Aorta (tissue), 5 donors: ENCODE measurements at regions of chr11 and their contacts with region 1.

Region 1: GRCh38 chr11:61792310-61793085 is at the starts of genes FEN1 and TMEM258:
- DNase-seq: peak; percentile 94 to 96
- ATAC-seq: peak; percentile 96
- H3K4me3 ChIP-seq: peak within 1 kb of the TSS; percentile 65 to 82
- H3K27ac ChIP-seq: peak within 1 kb of the TSS in 1 of 2 donors; percentile 98
- H3K4me1 ChIP-seq: no peaks in the 10 kb centered on the region
- H3K27me3 ChIP-seq: no peaks in the 10 kb centered on the region
- total RNA-seq, gene FEN1: 5.5 to 6.9 TPM
- total RNA-seq, gene TMEM258: 73.2 to 84.1 TPM

Region 2: GRCh38 chr11:61477727-61478148 is 314.8 kb before region 1 on chr11:
- intact Hi-C with region 1: no loop called
- DNase-seq: peak; percentile 59 to 89
- ATAC-seq: peak; percentile 55
- H3K4me3 ChIP-seq: no peak overlapping the region
- H3K27ac ChIP-seq: no peak overlapping the region
- H3K4me1 ChIP-seq: no peaks in the 10 kb centered on the region
- H3K27me3 ChIP-seq: no peaks in the 10 kb centered on the region

Region 3: DNA sequence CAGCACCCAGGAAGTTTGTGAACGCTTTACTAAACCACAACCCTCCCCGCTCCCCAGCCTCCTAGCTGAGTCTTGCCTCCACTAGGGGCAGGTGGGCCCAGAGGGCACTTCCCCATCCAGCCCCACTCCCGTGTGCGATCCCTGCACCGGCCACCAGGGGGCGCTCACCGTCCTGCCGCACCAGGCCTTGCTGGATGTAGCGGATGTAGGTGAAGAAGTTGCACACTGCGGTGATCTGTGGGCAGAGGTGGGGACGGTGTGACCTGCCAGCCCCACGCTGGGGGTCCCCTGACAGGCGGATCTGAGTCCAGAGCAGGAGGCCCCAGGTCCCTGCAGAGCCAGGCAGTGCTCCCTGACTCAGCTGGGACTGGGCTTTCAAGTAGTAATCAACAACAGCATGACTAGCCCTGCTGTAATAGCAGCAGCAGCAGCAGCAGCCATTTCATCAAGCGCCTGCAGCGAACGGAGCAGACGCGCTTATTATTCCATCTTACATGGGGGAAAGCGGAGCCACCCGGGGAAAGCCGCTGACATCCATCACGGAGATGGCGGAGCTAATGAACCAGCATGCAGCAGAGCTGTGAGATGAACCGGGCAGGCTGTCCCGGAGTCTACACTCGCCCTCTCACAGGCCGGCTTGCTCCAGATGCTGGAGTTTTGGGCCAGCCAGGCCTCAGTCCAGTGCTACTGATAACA is 106.8 kb after region 1 on chr11:
- intact Hi-C with region 1: loop called in 1 of 2 experiments (anchors 5 kb)
- DNase-seq: peak; percentile 89 to 96
- ATAC-seq: peak; percentile 89
- H3K4me3 ChIP-seq: no peak overlapping the region
- H3K27ac ChIP-seq: no peak overlapping the region
- H3K4me1 ChIP-seq: no peaks in the 10 kb centered on the region
- H3K27me3 ChIP-seq: no peaks in the 10 kb centered on the region

Region 4: GRCh38 chr11:62081378-62082291 is 289.1 kb after region 1 on chr11:
- intact Hi-C with region 1: loop called in 1 of 2 experiments (anchors 5 kb)
- DNase-seq: peak; percentile 86 to 95
- ATAC-seq: peak; percentile 88
- H3K4me3 ChIP-seq: no peak overlapping the region
- H3K27ac ChIP-seq: no peak overlapping the region
- H3K4me1 ChIP-seq: no peaks in the 10 kb centered on the region
- H3K27me3 ChIP-seq: no peaks in the 10 kb centered on the region

Region 5: DNA sequence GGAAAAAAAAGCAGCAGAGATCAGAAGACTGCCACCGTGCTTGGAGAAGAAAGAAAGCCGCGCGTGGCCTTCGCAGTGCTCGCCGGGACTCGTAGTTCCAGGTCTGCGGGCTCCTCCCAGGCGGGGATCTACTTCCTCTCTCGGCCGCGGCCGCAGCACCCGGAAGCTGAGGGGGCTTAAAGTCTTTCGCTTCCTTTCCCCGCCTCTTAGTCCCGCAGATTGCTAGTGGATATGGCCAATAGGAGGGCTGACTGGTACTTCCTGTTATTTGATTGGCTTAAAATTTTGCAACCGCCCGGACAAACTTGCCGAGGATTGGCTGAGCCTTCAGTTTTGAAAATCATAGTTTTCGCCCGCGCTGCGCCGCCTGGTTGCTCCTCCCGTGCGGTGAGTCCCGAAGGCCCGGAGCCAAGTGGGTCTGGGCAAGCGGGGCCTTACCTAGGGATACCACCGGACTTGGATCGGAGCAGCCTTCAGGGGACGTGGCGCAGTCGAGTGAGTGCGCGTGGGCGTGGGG is 331.2 kb after region 1 on chr11 and contains the start of gene INCENP:
- intact Hi-C with region 1: loop called in 1 of 2 experiments (anchors 5 kb)
- DNase-seq: peak; percentile 98
- ATAC-seq: peak; percentile 99
- H3K4me3 ChIP-seq: peak within 1 kb of the TSS; percentile 71 to 78
- H3K27ac ChIP-seq: no peak within 1 kb of the TSS
- H3K4me1 ChIP-seq: no peaks in the 10 kb centered on the region
- H3K27me3 ChIP-seq: no peaks in the 10 kb centered on the region
- total RNA-seq, gene INCENP: 17.8 to 19.8 TPM

Region 6: GRCh38 chr11:62157603-62158002 is 365.1 kb after region 1 on chr11:
- intact Hi-C with region 1: no loop called
- DNase-seq: no peak
- ATAC-seq: no peak
- H3K4me3 ChIP-seq: no peak overlapping the region
- H3K27ac ChIP-seq: no peak overlapping the region
- H3K4me1 ChIP-seq: no peaks in the 10 kb centered on the region
- H3K27me3 ChIP-seq: no peaks in the 10 kb centered on the region